ENCODE measurements at regions of chr1 and their contacts with region 1.

Region 1: GRCh38 chr1:61077676-61078541 is 4.5 kb upstream of the NFIA start:
- DNase-seq: peak; percentile 84 to 97
- ATAC-seq: peak; percentile 74 to 91 (median 86)
- H3K4me3 ChIP-seq: peak overlapping the region; percentile 47 to 77 (median 66)
- H3K27ac ChIP-seq: peak overlapping the region; percentile 71 to 99 (median 94)
- H3K4me1 ChIP-seq: peaks cover 16 to 45% (median 39%) of the 10 kb centered on the region in 9 donors
- H3K27me3 ChIP-seq: no peaks in the 10 kb centered on the region
- CTCF ChIP-seq: peak in 1 of 9 donors; percentile 25

Region 2: GRCh38 chr1:60874716-60875115 is 203.2 kb before region 1 on chr1:
- intact Hi-C with region 1: no loop called
- DNase-seq: no peak
- ATAC-seq: peak in 3 of 8 donors; percentile 22 to 38 (median 37)
- H3K4me3 ChIP-seq: no peak overlapping the region
- H3K27ac ChIP-seq: no peak overlapping the region
- H3K4me1 ChIP-seq: no peaks in the 10 kb centered on the region
- H3K27me3 ChIP-seq: no peaks in the 10 kb centered on the region
- CTCF ChIP-seq: no peak

Region 3: GRCh38 chr1:61035880-61036279 is 42.0 kb before region 1 on chr1:
- intact Hi-C with region 1: no loop called
- DNase-seq: no peak
- ATAC-seq: no peak
- H3K4me3 ChIP-seq: no peak overlapping the region
- H3K27ac ChIP-seq: no peak overlapping the region
- H3K4me1 ChIP-seq: no peaks in the 10 kb centered on the region
- H3K27me3 ChIP-seq: no peaks in the 10 kb centered on the region
- CTCF ChIP-seq: no peak

Region 4: DNA sequence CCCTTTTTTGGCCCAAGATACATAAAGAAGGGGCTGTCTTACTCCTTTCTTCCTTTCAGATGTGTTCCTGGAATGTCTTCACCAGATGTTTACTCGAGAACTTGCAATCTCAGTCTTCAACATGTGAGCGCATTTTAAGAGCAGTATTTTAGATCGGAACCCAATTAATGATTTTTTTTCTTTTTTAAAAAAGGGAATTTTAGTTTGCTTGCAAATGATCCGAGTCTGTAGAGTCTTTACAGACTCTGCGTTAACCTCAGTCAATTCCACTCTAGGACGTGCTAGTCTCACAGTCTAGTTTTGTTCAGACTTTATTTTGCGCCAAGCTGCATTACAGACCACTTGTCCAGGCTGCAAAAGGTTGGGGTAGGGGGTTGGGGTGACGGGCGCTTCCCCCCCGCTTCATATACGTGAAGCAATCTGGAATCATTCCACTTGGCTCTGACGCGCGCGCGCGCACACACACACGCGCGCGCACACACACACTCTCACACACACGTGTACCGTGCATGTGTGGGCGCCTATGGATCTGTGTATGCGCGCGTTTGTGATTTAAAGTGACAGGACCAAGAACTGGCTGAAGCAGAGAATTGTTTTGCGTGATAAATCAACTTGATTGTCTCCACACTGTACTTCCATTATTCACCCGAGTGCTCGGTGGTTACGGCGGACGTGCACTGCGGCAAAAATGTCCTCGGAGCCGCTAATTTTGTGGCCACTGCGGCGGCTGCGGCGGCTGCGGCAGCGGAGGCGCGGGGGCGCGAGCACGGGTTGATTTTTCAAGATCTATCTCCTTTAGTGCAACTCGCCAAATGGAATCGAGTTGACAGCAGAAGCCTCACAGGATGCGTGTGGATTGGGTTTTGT is 21.1 kb before region 1 on chr1:
- intact Hi-C with region 1: loop called in 5 of 10 experiments (anchors 1 to 2 kb)
- DNase-seq: peak; percentile 55 to 60
- ATAC-seq: peak; percentile 40 to 71 (median 58)
- H3K4me3 ChIP-seq: peak overlapping the region; percentile 60 to 86 (median 72)
- H3K27ac ChIP-seq: peak overlapping the region; percentile 76 to 100 (median 88)
- H3K4me1 ChIP-seq: peaks cover 6 to 57% (median 45%) of the 10 kb centered on the region in 9 donors
- H3K27me3 ChIP-seq: peaks cover 0 to 29% (median 0%) of the 10 kb centered on the region in 7 donors
- CTCF ChIP-seq: no peak

Region 5: DNA sequence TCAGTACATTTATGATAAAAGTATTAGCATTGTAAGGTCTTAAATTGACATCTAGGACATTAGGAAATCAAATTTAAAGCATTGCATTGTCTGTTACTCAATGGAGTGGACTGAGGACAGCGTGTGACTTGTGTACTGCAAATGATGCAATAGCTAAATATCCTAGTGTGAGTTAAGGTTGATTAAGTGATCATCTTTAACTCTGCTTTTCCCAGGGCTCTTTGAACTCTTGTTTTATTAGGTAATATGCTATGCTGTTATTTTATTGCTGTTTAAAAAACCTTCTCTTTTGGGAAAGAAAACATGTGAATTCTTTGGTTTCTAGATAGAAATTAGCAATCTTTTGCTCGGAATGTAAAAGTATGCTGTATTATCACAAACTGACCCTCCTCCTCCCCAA is 43.1 kb after region 1 on chr1:
- intact Hi-C with region 1: loop called in 4 of 10 experiments (anchors 5 kb)
- DNase-seq: no peak
- ATAC-seq: peak in 7 of 8 donors; percentile 40 to 83 (median 63)
- H3K4me3 ChIP-seq: peak overlapping the region in 8 of 10 donors; percentile 2 to 39 (median 29)
- H3K27ac ChIP-seq: peak overlapping the region; percentile 36 to 85 (median 65)
- H3K4me1 ChIP-seq: peaks cover 10 to 97% (median 77%) of the 10 kb centered on the region in 9 donors
- H3K27me3 ChIP-seq: no peaks in the 10 kb centered on the region
- CTCF ChIP-seq: no peak

Region 6: DNA sequence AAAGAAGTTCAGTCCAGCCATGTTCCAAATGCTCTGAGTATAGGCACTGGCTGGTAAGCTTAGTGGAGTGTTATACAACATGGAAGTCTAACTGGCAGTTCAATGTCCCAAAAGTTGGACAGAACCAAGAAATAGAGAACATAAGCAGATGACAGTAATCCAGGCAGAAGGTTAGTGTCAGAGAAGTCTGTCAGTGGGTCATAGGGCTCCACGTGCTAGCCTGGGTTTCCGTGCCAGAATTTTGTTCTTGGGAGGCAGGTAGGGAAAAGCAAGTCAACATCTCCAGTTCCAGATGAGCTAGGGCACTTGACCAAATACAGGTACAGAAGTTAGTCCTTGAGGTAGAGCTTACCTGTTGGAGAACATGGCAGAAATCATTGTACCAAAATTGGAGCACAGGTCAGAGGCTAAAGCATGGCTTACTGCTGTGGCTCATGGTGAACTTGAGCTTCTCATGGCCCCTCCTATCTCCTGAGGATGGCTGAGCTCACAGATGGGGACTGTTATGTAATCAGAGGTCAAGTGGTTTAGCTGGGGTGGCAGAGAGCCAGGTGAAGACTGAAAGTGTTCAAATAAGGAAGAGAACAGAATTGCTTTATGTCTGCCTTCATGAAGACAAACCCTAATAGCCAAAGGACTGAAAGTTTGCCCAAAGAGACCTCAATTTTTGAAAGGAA is 175.3 kb after region 1 on chr1:
- intact Hi-C with region 1: loop called in 1 of 10 experiments (anchors 10 kb)
- DNase-seq: peak; percentile 44 to 81
- ATAC-seq: peak; percentile 67 to 82 (median 77)
- H3K4me3 ChIP-seq: no peak overlapping the region
- H3K27ac ChIP-seq: peak overlapping the region in 9 of 10 donors; percentile 23 to 78 (median 70)
- H3K4me1 ChIP-seq: peaks cover 19 to 90% (median 57%) of the 10 kb centered on the region in 9 donors
- H3K27me3 ChIP-seq: no peaks in the 10 kb centered on the region
- CTCF ChIP-seq: no peak

Region 7: GRCh38 chr1:61436016-61436415 is 358.1 kb after region 1 on chr1:
- intact Hi-C with region 1: loop called in 1 of 10 experiments (anchors 5 kb)
- DNase-seq: no peak
- ATAC-seq: peak in 7 of 8 donors; percentile 6 to 68 (median 23)
- H3K4me3 ChIP-seq: no peak overlapping the region
- H3K27ac ChIP-seq: peak overlapping the region; percentile 47 to 80 (median 69)
- H3K4me1 ChIP-seq: peaks cover 4 to 65% (median 53%) of the 10 kb centered on the region in 9 donors
- H3K27me3 ChIP-seq: no peaks in the 10 kb centered on the region
- CTCF ChIP-seq: peak in 6 of 9 donors; percentile 6 to 47 (median 31)

Measured in heart right ventricle (tissue), 16 donors.